ENCODE measurements at regions of chr17 and their contacts with region 1.

Region 1: DNA sequence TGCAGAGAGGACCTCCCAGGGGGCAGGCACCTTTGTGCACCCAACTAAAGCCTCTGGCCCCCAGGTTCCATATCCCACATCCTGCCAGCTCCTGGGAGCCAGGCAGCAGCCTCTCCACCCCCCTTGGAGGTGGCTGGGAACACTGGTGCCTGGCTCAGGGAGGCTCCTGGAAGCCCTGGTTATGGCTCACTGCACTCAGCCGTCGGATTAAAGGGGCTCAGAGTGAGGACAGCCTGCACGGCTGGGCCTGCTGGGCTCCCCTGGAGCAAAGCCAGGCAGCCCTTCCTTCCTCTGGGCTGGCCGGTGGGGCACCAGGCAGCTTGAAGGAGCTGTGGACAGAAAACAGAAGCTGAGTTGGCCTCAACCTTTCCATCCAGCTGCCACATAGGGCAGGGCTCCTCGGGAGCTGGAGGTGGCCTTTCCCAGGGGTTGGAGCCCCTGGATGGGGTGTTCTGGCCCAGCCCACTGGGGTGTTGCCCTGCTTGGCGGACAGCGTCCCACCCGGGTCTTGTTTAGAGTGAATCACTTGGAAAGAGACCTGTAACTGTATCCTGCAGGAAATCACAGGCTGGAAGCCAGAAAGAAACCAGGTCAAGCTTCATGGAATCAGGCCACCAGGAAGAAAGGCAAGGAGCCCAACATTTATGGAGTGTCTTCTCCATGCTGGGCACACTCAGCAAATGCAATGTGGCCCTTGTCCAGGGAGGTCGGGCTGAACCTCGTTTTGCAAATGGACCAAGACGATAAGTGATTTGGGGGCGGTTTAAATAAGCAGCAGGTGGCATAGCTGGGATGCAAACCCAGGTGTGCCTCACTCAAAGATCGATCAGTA is 253.3 kb downstream of the SOX9 start:
- DNase-seq: peak; percentile 71
- H3K4me3 ChIP-seq: no peak overlapping the region
- H3K27ac ChIP-seq: peak overlapping the region; percentile 48
- H3K4me1 ChIP-seq: peaks cover 62% of the 10 kb centered on the region
- H3K27me3 ChIP-seq: no peaks in the 10 kb centered on the region
- CTCF ChIP-seq: no peak

Region 2: DNA sequence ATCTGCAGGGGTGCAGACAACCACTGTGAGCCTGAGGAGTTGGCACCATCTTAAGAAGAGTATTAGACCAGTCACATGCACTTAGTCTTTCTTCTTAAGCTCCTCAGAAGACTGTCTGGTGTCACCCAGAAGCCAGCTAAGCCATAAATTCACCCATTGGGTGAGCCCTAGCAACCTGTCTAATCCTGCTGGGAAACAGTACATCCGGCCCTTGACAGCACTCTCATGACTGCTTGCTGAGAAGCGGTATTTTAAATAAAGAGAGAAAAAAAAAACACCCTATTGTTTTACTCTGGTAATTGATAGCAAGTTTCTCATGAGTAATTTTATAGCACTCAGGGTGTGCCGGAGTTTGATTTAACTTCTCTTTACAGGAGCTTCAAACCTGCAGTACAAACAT is 118.6 kb before region 1 on chr17:
- CTCF ChIA-PET with region 1: interaction called, 12 read pairs
- POLR2A ChIA-PET with region 1: no interaction called
- intact Hi-C with region 1: no loop called
- DNase-seq: peak; percentile 53
- H3K4me3 ChIP-seq: no peak overlapping the region
- H3K27ac ChIP-seq: no peak overlapping the region
- H3K4me1 ChIP-seq: no peaks in the 10 kb centered on the region
- H3K27me3 ChIP-seq: no peaks in the 10 kb centered on the region
- CTCF ChIP-seq: no peak

Region 3: GRCh38 chr17:72419866-72420774 is 46.0 kb after region 1 on chr17:
- CTCF ChIA-PET with region 1: no interaction called
- POLR2A ChIA-PET with region 1: no interaction called
- intact Hi-C with region 1: loop called (anchors 5 kb)
- DNase-seq: peak; percentile 77
- H3K4me3 ChIP-seq: no peak overlapping the region
- H3K27ac ChIP-seq: peak overlapping the region; percentile 26
- H3K4me1 ChIP-seq: peaks cover 44% of the 10 kb centered on the region
- H3K27me3 ChIP-seq: no peaks in the 10 kb centered on the region
- CTCF ChIP-seq: no peak